B cell (primary cell): ENCODE measurements at regions of chr15 and their contacts with region 1.

Region 1: DNA sequence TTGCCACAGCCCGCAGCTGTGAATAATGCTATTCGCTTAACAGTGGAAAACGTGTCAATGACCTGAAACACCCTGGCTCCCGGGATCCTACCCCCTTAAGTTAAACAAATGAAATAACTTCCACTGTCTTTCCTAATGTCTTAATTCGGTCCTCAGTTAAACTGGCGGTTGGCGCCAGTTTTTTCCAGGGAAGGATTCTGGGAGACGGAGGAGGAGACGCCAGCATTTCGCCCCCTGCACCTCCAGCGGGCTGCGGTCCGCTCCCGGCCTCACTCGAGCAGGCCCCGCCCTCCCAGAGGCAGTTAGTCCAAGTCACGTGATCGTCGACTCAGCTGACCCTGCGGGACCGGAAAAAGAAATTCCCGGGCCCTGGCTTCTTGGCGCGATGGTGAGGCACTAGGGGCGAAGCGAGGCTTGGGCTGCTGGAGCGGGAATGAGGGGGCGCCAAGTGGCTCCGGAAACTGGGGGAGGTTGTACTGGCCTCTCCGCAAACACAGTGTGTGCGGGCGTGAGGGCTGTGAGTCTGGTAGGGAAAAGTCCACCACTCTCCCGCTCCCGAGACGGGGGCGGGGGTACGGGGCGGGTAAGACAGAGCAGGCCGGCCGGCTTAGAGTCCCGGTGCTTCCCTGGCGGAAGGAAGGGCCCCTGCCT is at the start of gene COMMD4:
- DNase-seq: peak; percentile 81
- ATAC-seq: peak; percentile 84
- H3K4me3 ChIP-seq: peak within 1 kb of the TSS; percentile 34 to 93 (median 83)
- H3K4me3 Mint-ChIP-seq: peak within 1 kb of the TSS; percentile 96
- H3K27ac ChIP-seq: peak within 1 kb of the TSS; percentile 55 to 76
- H3K27ac Mint-ChIP-seq: peak within 1 kb of the TSS; percentile 90
- H3K4me1 ChIP-seq: peaks cover 9 to 16% of the 10 kb centered on the region in 2 donors
- H3K4me1 Mint-ChIP-seq: peaks cover 18% of the 10 kb centered on the region
- H3K27me3 ChIP-seq: no peaks in the 10 kb centered on the region
- H3K27me3 Mint-ChIP-seq: peaks cover 4% of the 10 kb centered on the region
- CTCF ChIP-seq: no peak
- total RNA-seq, gene COMMD4: 54.2 and 63.5 TPM in 2 replicates

Region 2: GRCh38 chr15:75347222-75347878 is 11.5 kb after region 1 on chr15:
- CTCF ChIA-PET with region 1: no interaction called
- POLR2A ChIA-PET with region 1: interaction called, 12 read pairs
- intact Hi-C with region 1: loop called (anchors 1 kb)
- DNase-seq: peak; percentile 97
- ATAC-seq: peak; percentile 80
- H3K4me3 ChIP-seq: peak overlapping the region; percentile 3 to 82 (median 70)
- H3K4me3 Mint-ChIP-seq: peak overlapping the region; percentile 80
- H3K27ac ChIP-seq: peak overlapping the region; percentile 92 to 94
- H3K27ac Mint-ChIP-seq: peak overlapping the region; percentile 94
- H3K4me1 ChIP-seq: peaks cover 31 to 47% of the 10 kb centered on the region in 2 donors
- H3K4me1 Mint-ChIP-seq: peaks cover 45% of the 10 kb centered on the region
- H3K27me3 ChIP-seq: no peaks in the 10 kb centered on the region
- H3K27me3 Mint-ChIP-seq: no peaks in the 10 kb centered on the region
- CTCF ChIP-seq: no peak

Region 3: DNA sequence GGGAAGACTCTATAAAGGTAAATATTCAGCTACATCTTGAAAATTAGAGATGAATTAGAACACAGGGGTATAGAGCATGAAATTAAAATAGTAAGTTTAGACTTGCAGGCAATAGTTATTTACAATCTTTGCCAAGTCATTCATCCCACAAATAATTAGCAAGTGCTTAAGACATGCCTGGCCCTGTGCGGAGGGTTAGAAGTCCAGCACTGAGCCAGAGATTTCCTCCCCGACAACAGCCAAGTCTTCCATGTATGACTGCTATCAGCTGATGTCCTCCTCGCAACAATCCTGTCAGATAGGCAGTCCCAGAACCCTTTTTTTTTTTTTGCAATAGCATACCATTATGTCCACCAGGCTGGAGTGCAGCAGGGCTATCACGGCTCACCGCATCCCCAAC is 101.0 kb after region 1 on chr15:
- CTCF ChIA-PET with region 1: no interaction called
- POLR2A ChIA-PET with region 1: no interaction called
- intact Hi-C with region 1: no loop called
- DNase-seq: no peak
- ATAC-seq: no peak
- H3K4me3 ChIP-seq: no peak overlapping the region
- H3K4me3 Mint-ChIP-seq: no peak overlapping the region
- H3K27ac ChIP-seq: no peak overlapping the region
- H3K27ac Mint-ChIP-seq: no peak overlapping the region
- H3K4me1 ChIP-seq: peaks cover 5 to 7% of the 10 kb centered on the region in 2 donors
- H3K4me1 Mint-ChIP-seq: peaks cover 38% of the 10 kb centered on the region
- H3K27me3 ChIP-seq: no peaks in the 10 kb centered on the region
- H3K27me3 Mint-ChIP-seq: no peaks in the 10 kb centered on the region
- CTCF ChIP-seq: no peak